ENCODE measurements at regions of chr11 and their contacts with region 1.

Region 1: DNA sequence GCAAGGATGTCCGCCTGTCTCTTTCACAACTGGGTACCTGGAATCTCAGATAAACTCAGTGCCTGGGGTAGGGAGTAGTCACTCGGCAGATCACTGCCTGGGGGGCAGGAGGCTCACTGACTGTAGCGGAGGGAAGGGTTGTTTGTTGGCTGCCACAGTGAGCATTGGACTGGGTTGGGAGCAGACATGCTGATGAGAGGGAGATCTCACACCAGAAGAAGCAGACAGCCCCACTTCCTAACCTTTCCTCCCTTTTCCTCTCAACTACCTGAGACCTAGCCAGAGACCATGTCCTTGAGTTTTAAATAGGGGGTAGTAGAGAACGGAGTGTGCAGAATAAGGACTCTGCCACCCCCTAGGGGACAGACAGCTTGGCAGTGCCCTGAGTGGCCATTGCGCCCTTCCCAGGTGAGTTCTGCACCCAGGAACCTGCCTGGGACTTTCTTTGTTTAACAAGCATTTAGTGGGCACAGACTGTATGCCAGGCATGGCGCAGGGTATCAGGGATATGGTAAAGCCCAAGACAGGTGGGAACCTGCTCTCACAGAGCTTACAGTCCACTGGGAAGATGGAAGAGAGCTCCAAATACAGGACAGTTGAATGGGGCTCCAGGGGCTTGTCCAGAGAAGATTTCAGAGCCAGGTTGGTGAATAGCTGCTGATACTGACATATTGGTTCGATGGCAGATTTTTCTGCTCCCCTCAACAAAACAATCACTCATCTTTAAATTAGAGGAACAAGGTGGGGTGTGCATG is 115.7 kb upstream of the NNMT start:
- DNase-seq: no peak
- H3K4me3 ChIP-seq: no peak overlapping the region
- H3K27ac ChIP-seq: no peak overlapping the region
- H3K4me1 ChIP-seq: peaks cover 0 to 6% (median 0%) of the 10 kb centered on the region in 4 experiments; a peak in 2 of 7 replicates
- H3K27me3 ChIP-seq: no peaks in the 10 kb centered on the region
- CTCF ChIP-seq: peak; percentile 75 to 87 (median 79)
- EP300 ChIP-seq: no peak
- POLR2A ChIP-seq: no peak
- RAD21 ChIP-seq: peak; percentile 82 to 87

Region 2: DNA sequence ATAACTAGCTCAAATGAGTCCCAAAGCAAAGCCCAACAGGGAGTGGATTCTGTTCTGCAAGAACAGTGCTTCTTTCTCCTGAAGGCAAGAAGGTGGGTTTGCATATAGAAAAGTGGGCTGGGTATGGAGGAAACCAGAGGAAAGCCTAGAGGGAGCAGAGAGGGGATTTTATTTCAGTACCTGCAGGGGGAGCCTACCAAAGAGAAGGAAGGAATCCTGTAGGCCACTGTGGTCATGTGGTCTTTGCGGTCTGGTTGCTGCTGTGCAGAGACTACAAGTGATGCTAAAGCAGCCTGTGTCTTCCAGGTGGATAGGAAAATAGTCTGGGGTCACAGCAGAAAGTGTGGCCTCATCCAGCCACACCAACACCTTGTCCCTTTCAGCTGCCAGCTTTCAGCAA is 154.1 kb before region 1 on chr11:
- CTCF ChIA-PET with region 1: interaction called, 54 read pairs
- POLR2A ChIA-PET with region 1: no interaction called
- DNase-seq: peak in 1 of 2 experiments; percentile 10
- H3K4me3 ChIP-seq: no peak overlapping the region
- H3K27ac ChIP-seq: no peak overlapping the region
- H3K4me1 ChIP-seq: no peaks in the 10 kb centered on the region
- H3K27me3 ChIP-seq: peaks cover 0 to 2% (median 0%) of the 10 kb centered on the region in 4 experiments; a peak in 1 of 7 replicates
- CTCF ChIP-seq: peak in 2 of 3 experiments; percentile 48 to 68; a peak in 3 of 4 replicates
- EP300 ChIP-seq: no peak
- POLR2A ChIP-seq: no peak
- RAD21 ChIP-seq: peak; percentile 29 to 45; a peak in 3 of 4 replicates

Region 3: GRCh38 chr11:114059278-114059983 is 121.0 kb before region 1 on chr11 and contains the start of gene ZBTB16:
- CTCF ChIA-PET with region 1: interaction called, 19 read pairs
- POLR2A ChIA-PET with region 1: no interaction called
- DNase-seq: peak; percentile 61 to 82
- H3K4me3 ChIP-seq: peak within 1 kb of the TSS; percentile 41 to 80 (median 56)
- H3K27ac ChIP-seq: no peak within 1 kb of the TSS
- H3K4me1 ChIP-seq: peaks cover 0 to 24% (median 12%) of the 10 kb centered on the region in 4 experiments; a peak in 6 of 7 replicates
- H3K27me3 ChIP-seq: peaks cover 54 to 83% (median 77%) of the 10 kb centered on the region in 4 experiments
- CTCF ChIP-seq: 0 out of 4 replicates have a peak, but pooled peaks of 1 of the 3 experiments have one; percentile 14
- EP300 ChIP-seq: no peak
- POLR2A ChIP-seq: no peak
- RAD21 ChIP-seq: peak; percentile 5 to 33; a peak in 2 of 4 replicates
- total RNA-seq, gene ZBTB16: 0.25 and 0.61 TPM in 2 replicates

Region 4: GRCh38 chr11:114166897-114167323 is 13.6 kb before region 1 on chr11:
- CTCF ChIA-PET with region 1: interaction called, 28 read pairs
- POLR2A ChIA-PET with region 1: interaction called, 4 read pairs
- DNase-seq: no peak
- H3K4me3 ChIP-seq: no peak overlapping the region
- H3K27ac ChIP-seq: no peak overlapping the region
- H3K4me1 ChIP-seq: peaks cover 0 to 2% (median 0%) of the 10 kb centered on the region in 4 experiments; a peak in 1 of 7 replicates
- H3K27me3 ChIP-seq: no peaks in the 10 kb centered on the region
- CTCF ChIP-seq: no peak
- EP300 ChIP-seq: no peak
- POLR2A ChIP-seq: no peak
- RAD21 ChIP-seq: no peak

Region 5: GRCh38 chr11:114207096-114207495 is 26.6 kb after region 1 on chr11:
- CTCF ChIA-PET with region 1: interaction called, 20 read pairs
- POLR2A ChIA-PET with region 1: no interaction called
- DNase-seq: no peak
- H3K4me3 ChIP-seq: no peak overlapping the region
- H3K27ac ChIP-seq: no peak overlapping the region
- H3K4me1 ChIP-seq: peaks cover 0 to 5% (median 2%) of the 10 kb centered on the region in 4 experiments; a peak in 3 of 7 replicates
- H3K27me3 ChIP-seq: no peaks in the 10 kb centered on the region
- CTCF ChIP-seq: no peak
- EP300 ChIP-seq: no peak
- POLR2A ChIP-seq: no peak
- RAD21 ChIP-seq: no peak